ENCODE measurements at regions of chr1 and their contacts with region 1.

Region 1: GRCh38 chr1:65067491-65068201 is 80.4 kb upstream of the AK4 start:
- DNase-seq: peak; percentile 84
- ATAC-seq: peak; percentile 11
- H3K4me3 ChIP-seq: peak overlapping the region; percentile 65 to 93 (median 89)
- H3K4me3 Mint-ChIP-seq: peak overlapping the region; percentile 94
- H3K27ac ChIP-seq: peak overlapping the region; percentile 93 to 98
- H3K27ac Mint-ChIP-seq: peak overlapping the region; percentile 95
- H3K4me1 ChIP-seq: peaks cover 21 to 25% of the 10 kb centered on the region in 2 donors
- H3K4me1 Mint-ChIP-seq: peaks cover 46% of the 10 kb centered on the region
- H3K27me3 ChIP-seq: no peaks in the 10 kb centered on the region
- H3K27me3 Mint-ChIP-seq: no peaks in the 10 kb centered on the region
- CTCF ChIP-seq: no peak

Region 2: GRCh38 chr1:63522891-63523728 is 1544.5 kb before region 1 on chr1 and contains the starts of genes EFCAB7 and ITGB3BP:
- CTCF ChIA-PET with region 1: no interaction called
- POLR2A ChIA-PET with region 1: no interaction called
- intact Hi-C with region 1: loop called (anchors 2 kb)
- DNase-seq: peak; percentile 92
- ATAC-seq: peak; percentile 86
- H3K4me3 ChIP-seq: peak within 1 kb of the TSS; percentile 76 to 97 (median 88)
- H3K4me3 Mint-ChIP-seq: peak within 1 kb of the TSS; percentile 92
- H3K27ac ChIP-seq: peak within 1 kb of the TSS; percentile 88 to 91
- H3K27ac Mint-ChIP-seq: peak within 1 kb of the TSS; percentile 96
- H3K4me1 ChIP-seq: peaks cover 16 to 17% of the 10 kb centered on the region in 2 donors
- H3K4me1 Mint-ChIP-seq: peaks cover 26% of the 10 kb centered on the region
- H3K27me3 ChIP-seq: no peaks in the 10 kb centered on the region
- H3K27me3 Mint-ChIP-seq: no peaks in the 10 kb centered on the region
- CTCF ChIP-seq: no peak
- total RNA-seq, gene EFCAB7: 11.2 and 14.7 TPM in 2 replicates
- total RNA-seq, gene ITGB3BP: 30.3 and 37.4 TPM in 2 replicates

Region 3: GRCh38 chr1:64744492-64745180 is 323.0 kb before region 1 on chr1 and contains the start of gene RAVER2:
- CTCF ChIA-PET with region 1: no interaction called
- POLR2A ChIA-PET with region 1: no interaction called
- intact Hi-C with region 1: loop called (anchors 10 kb)
- DNase-seq: peak; percentile 70
- ATAC-seq: peak; percentile 74
- H3K4me3 ChIP-seq: peak within 1 kb of the TSS in 4 of 5 experiments; percentile 48 to 74 (median 60)
- H3K4me3 Mint-ChIP-seq: peak within 1 kb of the TSS; percentile 91
- H3K27ac ChIP-seq: peak within 1 kb of the TSS in 1 of 2 donors; percentile 36
- H3K27ac Mint-ChIP-seq: peak within 1 kb of the TSS; percentile 76
- H3K4me1 ChIP-seq: peaks cover 14 to 16% of the 10 kb centered on the region in 2 donors
- H3K4me1 Mint-ChIP-seq: peaks cover 18% of the 10 kb centered on the region
- H3K27me3 ChIP-seq: no peaks in the 10 kb centered on the region
- H3K27me3 Mint-ChIP-seq: peaks cover 17% of the 10 kb centered on the region
- CTCF ChIP-seq: peak; percentile 26
- total RNA-seq, gene RAVER2: 1.4 and 1.5 TPM in 2 replicates

Region 4: GRCh38 chr1:64881281-64881680 is 186.4 kb before region 1 on chr1:
- CTCF ChIA-PET with region 1: no interaction called
- POLR2A ChIA-PET with region 1: interaction called, 10 read pairs
- intact Hi-C with region 1: no loop called
- DNase-seq: no peak
- ATAC-seq: no peak
- H3K4me3 ChIP-seq: no peak overlapping the region
- H3K4me3 Mint-ChIP-seq: no peak overlapping the region
- H3K27ac ChIP-seq: no peak overlapping the region
- H3K27ac Mint-ChIP-seq: peak overlapping the region; percentile 26
- H3K4me1 ChIP-seq: peaks cover 0 to 6% of the 10 kb centered on the region in 2 donors
- H3K4me1 Mint-ChIP-seq: peaks cover 30% of the 10 kb centered on the region
- H3K27me3 ChIP-seq: no peaks in the 10 kb centered on the region
- H3K27me3 Mint-ChIP-seq: no peaks in the 10 kb centered on the region
- CTCF ChIP-seq: no peak

Region 5: GRCh38 chr1:65002508-65003315 is 64.9 kb before region 1 on chr1:
- CTCF ChIA-PET with region 1: interaction called, 4 read pairs
- POLR2A ChIA-PET with region 1: no interaction called
- intact Hi-C with region 1: loop called (anchors 2 kb)
- DNase-seq: peak; percentile 75
- ATAC-seq: peak; percentile 76
- H3K4me3 ChIP-seq: peak overlapping the region; percentile 39 to 74 (median 61)
- H3K4me3 Mint-ChIP-seq: peak overlapping the region; percentile 86
- H3K27ac ChIP-seq: peak overlapping the region in 1 of 2 donors; percentile 14
- H3K27ac Mint-ChIP-seq: peak overlapping the region; percentile 37
- H3K4me1 ChIP-seq: peaks cover 19 to 23% of the 10 kb centered on the region in 2 donors
- H3K4me1 Mint-ChIP-seq: peaks cover 26% of the 10 kb centered on the region
- H3K27me3 ChIP-seq: peaks cover 0 to 18% (median 5%) of the 10 kb centered on the region in 4 experiments
- H3K27me3 Mint-ChIP-seq: no peaks in the 10 kb centered on the region
- CTCF ChIP-seq: no peak

Region 6: GRCh38 chr1:65020774-65021173 is 46.9 kb before region 1 on chr1:
- CTCF ChIA-PET with region 1: no interaction called
- POLR2A ChIA-PET with region 1: no interaction called
- intact Hi-C with region 1: no loop called
- DNase-seq: no peak
- ATAC-seq: no peak
- H3K4me3 ChIP-seq: no peak overlapping the region
- H3K4me3 Mint-ChIP-seq: no peak overlapping the region
- H3K27ac ChIP-seq: no peak overlapping the region
- H3K27ac Mint-ChIP-seq: no peak overlapping the region
- H3K4me1 ChIP-seq: no peaks in the 10 kb centered on the region
- H3K4me1 Mint-ChIP-seq: no peaks in the 10 kb centered on the region
- H3K27me3 ChIP-seq: no peaks in the 10 kb centered on the region
- H3K27me3 Mint-ChIP-seq: no peaks in the 10 kb centered on the region
- CTCF ChIP-seq: peak; percentile 16

Region 7: GRCh38 chr1:65419681-65420589 is 352.3 kb after region 1 on chr1:
- CTCF ChIA-PET with region 1: no interaction called
- POLR2A ChIA-PET with region 1: no interaction called
- intact Hi-C with region 1: loop called (anchors 1 kb)
- DNase-seq: peak; percentile 99
- ATAC-seq: peak; percentile 91
- H3K4me3 ChIP-seq: peak overlapping the region; percentile 66 to 97 (median 92)
- H3K4me3 Mint-ChIP-seq: no peak overlapping the region
- H3K27ac ChIP-seq: peak overlapping the region; percentile 66 to 75
- H3K27ac Mint-ChIP-seq: no peak overlapping the region
- H3K4me1 ChIP-seq: peaks cover 14 to 23% of the 10 kb centered on the region in 2 donors
- H3K4me1 Mint-ChIP-seq: peaks cover 16% of the 10 kb centered on the region
- H3K27me3 ChIP-seq: peaks cover 0 to 8% (median 5%) of the 10 kb centered on the region in 4 experiments
- H3K27me3 Mint-ChIP-seq: peaks cover 15% of the 10 kb centered on the region
- CTCF ChIP-seq: no peak

Region 8: GRCh38 chr1:65734979-65735378 is 667.3 kb after region 1 on chr1:
- CTCF ChIA-PET with region 1: no interaction called
- POLR2A ChIA-PET with region 1: no interaction called
- intact Hi-C with region 1: no loop called
- DNase-seq: no peak
- ATAC-seq: no peak
- H3K4me3 ChIP-seq: no peak overlapping the region
- H3K4me3 Mint-ChIP-seq: no peak overlapping the region
- H3K27ac ChIP-seq: no peak overlapping the region
- H3K27ac Mint-ChIP-seq: no peak overlapping the region
- H3K4me1 ChIP-seq: no peaks in the 10 kb centered on the region
- H3K4me1 Mint-ChIP-seq: no peaks in the 10 kb centered on the region
- H3K27me3 ChIP-seq: no peaks in the 10 kb centered on the region
- H3K27me3 Mint-ChIP-seq: no peaks in the 10 kb centered on the region
- CTCF ChIP-seq: no peak

Region 9: DNA sequence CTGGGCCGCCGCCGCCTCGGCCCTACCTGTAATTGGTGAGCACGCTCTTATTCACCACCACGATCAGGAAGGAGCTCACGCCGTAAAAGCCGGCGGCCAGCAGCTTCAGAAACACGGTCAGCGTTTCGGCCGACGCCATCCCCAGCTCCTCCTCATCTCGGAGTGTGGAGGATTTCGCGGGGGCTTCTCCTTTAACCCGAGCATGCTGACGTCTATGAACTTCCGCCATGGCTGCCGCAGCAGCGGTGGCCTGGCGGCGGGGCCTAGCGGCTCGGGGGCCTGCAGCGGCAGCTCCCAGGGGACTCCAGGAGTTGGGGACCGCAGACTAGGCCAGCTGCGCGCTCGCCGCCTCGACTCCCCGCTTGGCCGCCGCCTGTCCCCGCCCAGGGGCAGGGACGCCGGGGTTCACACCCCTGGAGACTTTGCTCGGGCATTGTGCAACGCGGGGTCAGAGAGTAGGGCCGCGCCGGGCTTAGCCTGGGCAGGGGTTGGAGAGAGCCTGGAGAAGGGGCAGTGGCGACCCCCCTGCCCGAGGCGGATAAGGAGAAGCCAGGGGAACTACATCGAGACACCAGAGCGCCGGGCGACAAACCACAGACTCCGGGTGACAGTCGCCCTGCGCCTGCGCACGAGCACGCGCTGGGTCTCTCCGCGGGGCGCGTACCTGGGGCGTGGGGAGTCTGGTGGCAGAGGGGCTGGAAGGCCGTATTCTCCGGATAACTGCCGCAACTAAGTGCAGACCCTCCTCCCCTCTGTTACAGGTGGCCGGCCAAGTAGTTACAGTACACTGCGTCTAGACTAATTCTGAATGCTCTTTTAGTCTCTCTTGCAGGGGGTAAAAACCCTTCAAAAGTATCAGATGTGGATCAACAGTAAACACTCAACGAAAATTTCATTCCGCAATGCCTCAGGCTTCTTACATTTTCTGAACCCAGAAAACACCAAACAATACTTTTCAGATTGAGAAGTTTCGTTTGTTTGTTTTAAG is 1986.4 kb after region 1 on chr1 and contains the start of gene SLC35D1:
- CTCF ChIA-PET with region 1: no interaction called
- POLR2A ChIA-PET with region 1: no interaction called
- intact Hi-C with region 1: loop called (anchors 5 kb)
- DNase-seq: peak; percentile 93
- ATAC-seq: peak; percentile 88
- H3K4me3 ChIP-seq: peak within 1 kb of the TSS; percentile 68 to 78 (median 77)
- H3K4me3 Mint-ChIP-seq: peak within 1 kb of the TSS; percentile 90
- H3K27ac ChIP-seq: peak within 1 kb of the TSS; percentile 84 to 88
- H3K27ac Mint-ChIP-seq: peak within 1 kb of the TSS; percentile 95
- H3K4me1 ChIP-seq: peaks cover 11 to 15% of the 10 kb centered on the region in 2 donors
- H3K4me1 Mint-ChIP-seq: peaks cover 26% of the 10 kb centered on the region
- H3K27me3 ChIP-seq: no peaks in the 10 kb centered on the region
- H3K27me3 Mint-ChIP-seq: no peaks in the 10 kb centered on the region
- CTCF ChIP-seq: no peak
- total RNA-seq, gene SLC35D1: 16.8 and 17.1 TPM in 2 replicates